Sigmoid colon (tissue), 7 donors: ENCODE measurements at regions of chr14 and their contacts with region 1.

Region 1: DNA sequence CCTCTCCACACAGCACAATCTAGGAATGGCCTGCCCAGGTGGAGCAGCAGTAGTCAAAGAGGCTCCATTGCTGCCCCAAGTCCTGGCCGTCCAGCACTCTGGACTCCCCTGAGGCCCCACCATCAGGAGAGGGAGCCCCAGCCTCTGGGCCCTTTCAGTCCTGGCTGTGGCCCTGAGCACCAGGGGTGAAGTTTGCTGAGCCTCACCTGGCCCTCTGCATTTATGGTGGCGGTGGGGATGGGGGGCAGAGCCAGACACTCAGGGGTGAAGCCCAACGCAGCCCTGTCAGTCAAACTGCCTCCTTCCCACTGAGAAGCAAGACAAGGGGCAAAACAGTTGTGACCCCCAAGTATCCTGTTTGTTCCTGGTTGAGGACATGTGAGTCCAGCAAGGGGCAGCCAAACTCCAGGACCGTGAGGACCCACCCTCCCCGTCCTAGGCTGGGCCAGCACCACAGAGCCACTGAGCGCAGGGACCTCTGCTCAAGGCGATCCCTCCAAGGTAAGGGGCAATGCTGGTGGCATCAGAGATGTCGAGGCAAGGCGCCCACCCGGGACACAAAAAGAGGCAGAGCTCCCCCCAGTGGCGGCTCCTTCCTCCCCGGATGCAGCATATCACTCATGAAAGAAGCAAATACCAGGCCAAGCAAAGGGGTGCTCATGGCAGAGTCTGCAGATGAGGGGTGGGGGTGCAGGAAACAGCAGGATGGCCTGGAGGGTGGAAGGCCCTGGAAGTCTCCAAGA is 4.8 kb upstream of the AMN start:
- DNase-seq: no peak
- H3K4me3 ChIP-seq: no peak overlapping the region
- H3K27ac ChIP-seq: no peak overlapping the region
- H3K4me1 ChIP-seq: peaks cover 0 to 2% (median under 1%) of the 10 kb centered on the region in 4 donors
- H3K27me3 ChIP-seq: peaks cover under 1 to 6% (median 2%) of the 10 kb centered on the region in 3 donors
- CTCF ChIP-seq: peak; percentile 27 to 57 (median 34)
- EP300 ChIP-seq: no peak
- POLR2A ChIP-seq: no peak

Region 2: DNA sequence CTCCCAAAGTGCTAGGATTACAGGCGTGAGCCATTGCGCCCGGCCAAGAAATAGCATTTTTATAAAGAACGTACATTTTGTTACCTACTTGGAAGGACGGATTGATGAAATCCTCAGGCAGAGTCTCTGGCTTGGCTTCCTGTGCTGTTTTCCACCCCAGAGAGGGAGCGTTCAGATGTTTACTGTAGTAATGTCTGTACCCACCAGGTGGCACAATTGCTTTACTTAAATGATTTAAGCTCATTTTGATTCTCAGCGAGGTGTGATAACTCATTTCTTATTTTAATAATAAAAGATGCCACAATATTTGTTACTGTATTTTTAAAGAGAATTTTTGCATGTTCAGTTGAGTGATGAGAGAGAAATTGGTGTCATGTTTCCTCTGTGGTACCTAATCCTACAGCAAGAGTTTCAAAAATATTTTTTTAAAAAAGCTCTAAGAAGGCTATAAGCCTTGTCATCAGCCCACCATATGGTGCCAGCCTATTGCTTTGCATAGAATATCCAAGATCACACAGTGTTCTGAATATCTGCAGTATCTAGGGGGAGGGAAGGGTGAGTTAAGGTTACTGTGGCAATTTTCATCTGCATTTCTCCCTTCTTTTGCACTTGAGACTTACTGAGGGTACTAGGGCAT is 223.0 kb before region 1 on chr14:
- intact Hi-C with region 1: loop called (anchors 2 kb)
- DNase-seq: peak; percentile 79
- H3K4me3 ChIP-seq: no peak overlapping the region
- H3K27ac ChIP-seq: no peak overlapping the region
- H3K4me1 ChIP-seq: peaks cover 0 to 46% (median 22%) of the 10 kb centered on the region in 4 donors
- H3K27me3 ChIP-seq: no peaks in the 10 kb centered on the region
- CTCF ChIP-seq: peak; percentile 55 to 69 (median 60)
- EP300 ChIP-seq: no peak
- POLR2A ChIP-seq: no peak